ENCODE measurements at regions of chr10 and their contacts with region 1.

Region 1: GRCh38 chr10:124827474-124827873 is 25.9 kb downstream of the ABRAXAS2 start:
- DNase-seq: no peak
- ATAC-seq: no peak
- H3K4me3 ChIP-seq: no peak overlapping the region
- H3K27ac ChIP-seq: no peak overlapping the region
- H3K4me1 ChIP-seq: peaks cover 6 to 8% of the 10 kb centered on the region in 2 donors
- H3K27me3 ChIP-seq: no peaks in the 10 kb centered on the region
- CTCF ChIP-seq: peak in 4 of 5 experiments; percentile 34 to 62 (median 58)
- POLR2A ChIP-seq: no peak

Region 2: GRCh38 chr10:124530215-124530665 is 297.2 kb before region 1 on chr10:
- in situ Hi-C with region 1: loop called in 3 of 4 experiments (anchors 5 to 25 kb)
- intact Hi-C with region 1: no loop called
- DNase-seq: peak; percentile 69 to 84
- ATAC-seq: peak; percentile 69
- H3K4me3 ChIP-seq: no peak overlapping the region
- H3K27ac ChIP-seq: no peak overlapping the region
- H3K4me1 ChIP-seq: peaks cover 9 to 11% of the 10 kb centered on the region in 2 donors
- H3K27me3 ChIP-seq: no peaks in the 10 kb centered on the region
- CTCF ChIP-seq: peak; percentile 83 to 93 (median 89)
- POLR2A ChIP-seq: no peak